Activated T-helper 1 cell treated with anti-CD3 and anti-CD28 coated beads, Interleukin-12 subunit alpha, Interleukin-12 subunit beta, Interleukin-2, Interleukin-4 antibody, amounts not matched to agents 30 ng/mL and 10 ng/mL and 1 ng/mL, durations not matched to agents 14 hours and 24 hours and 36 hours (primary cell): ENCODE measurements at regions of chr7 and their contacts with region 1.

Region 1: DNA sequence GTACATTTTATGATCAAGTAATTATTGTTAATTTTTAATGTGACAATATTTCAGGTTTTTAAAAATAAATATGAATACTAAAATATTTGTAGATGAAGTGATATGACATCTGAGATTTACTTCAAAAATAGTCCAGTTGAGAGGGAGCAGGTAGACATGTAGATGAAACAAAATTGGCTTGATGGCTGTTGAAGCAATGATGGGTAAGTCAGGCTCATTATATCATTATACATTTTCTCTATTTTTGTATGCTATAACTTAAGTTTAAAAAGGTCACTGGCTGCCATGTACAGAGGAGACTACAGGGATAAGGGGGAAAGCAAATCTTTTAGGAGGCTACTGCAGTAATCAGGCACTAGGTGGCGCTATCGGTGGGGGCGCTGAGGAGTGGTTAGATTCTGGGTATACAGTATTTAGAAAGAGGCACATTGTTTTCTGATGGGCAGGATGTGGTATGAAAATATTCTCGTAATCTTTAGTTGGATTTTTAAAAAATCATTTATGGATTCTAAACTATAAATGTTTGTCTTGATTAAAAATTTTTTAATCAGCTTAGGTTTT is 189.8 kb upstream of the IMMP2L start:
- DNase-seq: peak; percentile 22
- H3K4me3 Mint-ChIP-seq: no peak overlapping the region
- H3K27ac Mint-ChIP-seq: no peak overlapping the region
- H3K4me1 Mint-ChIP-seq: no peaks in the 10 kb centered on the region
- H3K27me3 Mint-ChIP-seq: peaks cover 14% of the 10 kb centered on the region

Region 2: GRCh38 chr7:111855161-111855856 is 103.2 kb after region 1 on chr7:
- intact Hi-C with region 1: loop called (anchors 1 kb)
- DNase-seq: no peak
- H3K4me3 Mint-ChIP-seq: no peak overlapping the region
- H3K27ac Mint-ChIP-seq: no peak overlapping the region
- H3K4me1 Mint-ChIP-seq: peaks cover 3% of the 10 kb centered on the region
- H3K27me3 Mint-ChIP-seq: no peaks in the 10 kb centered on the region

Region 3: DNA sequence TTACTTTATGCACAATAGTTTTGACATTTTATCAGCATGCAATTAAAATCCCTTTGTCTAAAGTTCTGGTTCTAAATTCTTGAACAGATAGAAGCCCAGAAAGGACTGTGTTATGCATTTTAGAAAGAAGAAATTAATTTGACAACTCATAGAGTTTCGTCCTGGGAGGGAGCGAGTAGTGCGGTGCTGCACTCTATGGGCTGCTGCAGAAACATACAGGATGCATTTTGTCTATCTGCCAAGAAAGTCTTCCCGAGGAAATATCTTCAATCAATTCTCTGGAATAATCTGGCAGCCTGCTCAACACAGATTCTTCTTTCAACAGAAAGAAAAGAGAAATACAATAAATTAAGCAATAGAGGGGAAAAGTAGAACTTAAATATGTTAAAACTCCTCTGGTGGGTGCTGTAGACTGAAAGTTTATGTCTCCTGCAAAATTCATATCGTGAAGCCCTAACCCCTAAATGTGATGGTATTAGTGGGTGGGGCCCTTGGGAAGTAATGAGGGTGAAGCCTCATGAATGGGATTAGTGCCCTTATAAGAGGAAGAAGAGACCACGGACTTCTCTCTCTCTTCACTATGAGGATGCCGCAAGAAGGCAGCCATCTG is 659.2 kb after region 1 on chr7:
- intact Hi-C with region 1: loop called (anchors 1 kb)
- DNase-seq: no peak
- H3K4me3 Mint-ChIP-seq: no peak overlapping the region
- H3K27ac Mint-ChIP-seq: no peak overlapping the region
- H3K4me1 Mint-ChIP-seq: peaks cover 5% of the 10 kb centered on the region
- H3K27me3 Mint-ChIP-seq: peaks cover 25% of the 10 kb centered on the region

Region 4: DNA sequence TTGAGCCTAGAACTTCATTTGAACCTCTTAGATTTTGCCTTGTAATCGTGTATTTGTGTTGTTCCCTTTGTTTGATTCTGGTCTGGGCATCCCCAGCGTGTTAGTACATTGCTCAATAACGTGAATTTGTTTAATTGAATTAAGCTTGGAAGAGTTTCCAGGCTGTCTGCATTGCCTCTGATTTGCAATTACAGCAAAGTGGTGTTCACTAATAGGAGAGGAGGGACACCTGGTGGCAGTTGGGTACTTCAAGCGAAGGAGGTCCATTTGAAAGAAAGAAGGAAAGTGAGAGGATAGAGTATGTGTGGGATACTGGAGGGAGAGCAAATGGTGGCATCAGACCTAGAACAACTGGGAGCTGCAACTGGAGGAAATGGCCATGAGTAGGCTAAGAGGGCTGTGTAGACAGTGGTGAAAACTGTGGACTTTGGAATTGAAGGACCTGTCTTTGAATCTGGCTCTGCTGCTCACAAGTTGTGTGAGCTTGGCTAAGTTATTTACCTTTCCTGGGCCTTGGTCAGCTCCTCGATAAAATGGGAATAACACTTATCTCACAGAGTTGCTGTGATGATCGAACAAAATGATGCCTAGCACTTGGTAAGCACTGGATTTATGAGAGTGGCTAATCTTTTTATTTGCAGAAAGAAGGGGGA is 743.8 kb after region 1 on chr7:
- intact Hi-C with region 1: loop called (anchors 1 kb)
- DNase-seq: no peak
- H3K4me3 Mint-ChIP-seq: no peak overlapping the region
- H3K27ac Mint-ChIP-seq: no peak overlapping the region
- H3K4me1 Mint-ChIP-seq: no peaks in the 10 kb centered on the region
- H3K27me3 Mint-ChIP-seq: peaks cover 21% of the 10 kb centered on the region

Region 5: DNA sequence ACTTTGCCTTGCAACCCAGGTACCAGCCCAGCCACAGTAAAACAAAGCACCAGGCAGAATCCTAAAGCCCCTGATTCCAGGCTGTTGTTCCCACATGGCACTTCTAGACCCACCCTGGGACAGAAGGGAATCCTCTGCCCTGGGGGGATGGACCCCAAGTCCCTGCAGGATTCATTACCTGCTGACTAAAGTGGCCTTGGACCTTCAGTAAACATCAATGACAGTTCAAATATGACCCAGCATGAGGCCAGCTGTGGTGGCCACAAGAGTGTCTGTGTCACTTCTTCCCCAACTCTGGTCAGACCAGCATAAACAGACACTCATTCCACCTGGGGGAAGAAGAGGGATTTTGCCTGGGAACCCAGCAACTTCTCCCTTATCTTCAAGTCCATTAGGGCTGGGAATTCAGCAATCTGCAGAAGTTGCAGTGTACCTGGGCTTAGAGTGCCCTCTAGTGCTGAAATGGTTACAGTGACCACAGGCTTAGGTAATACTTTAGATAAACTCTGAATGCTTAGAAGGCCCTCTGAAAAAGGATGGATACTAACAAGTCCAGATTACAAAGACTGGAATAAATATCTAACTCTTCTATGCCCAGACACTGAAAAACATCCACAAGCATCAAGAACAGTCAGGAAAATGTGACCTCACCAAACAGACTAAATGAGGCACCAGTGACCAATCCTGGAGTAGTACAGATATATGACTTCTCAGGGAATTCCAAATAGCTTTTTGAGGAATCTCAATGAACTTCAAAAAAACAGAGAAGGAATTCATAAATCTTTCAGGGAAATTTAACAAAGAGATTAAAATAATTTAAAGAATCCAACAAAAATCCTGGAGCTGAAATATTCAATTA is 1146.6 kb after region 1 on chr7:
- intact Hi-C with region 1: loop called (anchors 1 kb)
- DNase-seq: peak; percentile 9
- H3K4me3 Mint-ChIP-seq: no peak overlapping the region
- H3K27ac Mint-ChIP-seq: no peak overlapping the region
- H3K4me1 Mint-ChIP-seq: no peaks in the 10 kb centered on the region
- H3K27me3 Mint-ChIP-seq: no peaks in the 10 kb centered on the region